GM12878 (cell line): ENCODE measurements at regions of chr4 and their contacts with region 1.

Region 1: GRCh38 chr4:171203425-171203824 is 609.8 kb upstream of the GALNTL6 start:
- DNase-seq: no peak
- ATAC-seq: no peak
- H3K4me3 ChIP-seq: no peak overlapping the region
- H3K27ac ChIP-seq: no peak overlapping the region
- H3K4me1 ChIP-seq: no peaks in the 10 kb centered on the region
- H3K27me3 ChIP-seq: no peaks in the 10 kb centered on the region
- CTCF ChIP-seq: no peak
- EP300 ChIP-seq: no peak
- POLR2A ChIP-seq: no peak
- RAD21 ChIP-seq: no peak

Region 2: DNA sequence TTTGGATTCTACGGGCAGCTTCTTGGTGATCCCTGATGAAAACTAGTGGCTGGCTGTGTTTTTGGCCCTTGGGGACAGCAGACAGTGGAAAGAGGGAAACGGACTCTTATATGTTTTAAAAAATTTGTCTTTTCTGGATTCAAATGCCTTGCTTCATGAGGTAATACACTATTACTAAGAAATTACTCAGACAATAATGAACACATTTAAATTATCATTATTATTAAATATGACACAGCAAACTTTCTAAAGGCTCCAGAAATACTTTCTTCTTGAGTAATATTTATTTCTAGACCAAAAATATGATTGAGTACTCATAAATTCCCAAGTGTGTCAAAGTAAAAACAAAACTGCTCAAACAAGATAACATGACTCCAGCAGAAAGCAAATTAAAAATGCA is 593.0 kb before region 1 on chr4:
- CTCF ChIA-PET with region 1: no interaction called
- POLR2A ChIA-PET with region 1: no interaction called
- RAD21 ChIA-PET with region 1: no interaction called
- SMC1A ChIA-PET with region 1: no interaction called
- in situ Hi-C with region 1: no loop called
- intact Hi-C with region 1: no loop called
- DNase-seq: no peak
- ATAC-seq: no peak
- H3K4me3 ChIP-seq: no peak overlapping the region
- H3K27ac ChIP-seq: no peak overlapping the region
- H3K4me1 ChIP-seq: no peaks in the 10 kb centered on the region
- H3K27me3 ChIP-seq: no peaks in the 10 kb centered on the region
- CTCF ChIP-seq: no peak
- EP300 ChIP-seq: no peak
- POLR2A ChIP-seq: no peak
- RAD21 ChIP-seq: no peak

Region 3: GRCh38 chr4:171650543-171650942 is 447.1 kb after region 1 on chr4:
- CTCF ChIA-PET with region 1: no interaction called
- POLR2A ChIA-PET with region 1: no interaction called
- RAD21 ChIA-PET with region 1: no interaction called
- SMC1A ChIA-PET with region 1: no interaction called
- in situ Hi-C with region 1: no loop called
- intact Hi-C with region 1: loop called (anchors 10 kb)
- DNase-seq: no peak
- ATAC-seq: peak; percentile 84
- H3K4me3 ChIP-seq: no peak overlapping the region
- H3K27ac ChIP-seq: no peak overlapping the region
- H3K4me1 ChIP-seq: no peaks in the 10 kb centered on the region
- H3K27me3 ChIP-seq: no peaks in the 10 kb centered on the region
- CTCF ChIP-seq: peak; percentile 34 to 41 (median 37); a peak in 4 of 6 replicates
- EP300 ChIP-seq: no peak
- POLR2A ChIP-seq: no peak
- RAD21 ChIP-seq: peak; percentile 69